ENCODE measurements at regions of chr15 and their contacts with region 1.

Region 1: DNA sequence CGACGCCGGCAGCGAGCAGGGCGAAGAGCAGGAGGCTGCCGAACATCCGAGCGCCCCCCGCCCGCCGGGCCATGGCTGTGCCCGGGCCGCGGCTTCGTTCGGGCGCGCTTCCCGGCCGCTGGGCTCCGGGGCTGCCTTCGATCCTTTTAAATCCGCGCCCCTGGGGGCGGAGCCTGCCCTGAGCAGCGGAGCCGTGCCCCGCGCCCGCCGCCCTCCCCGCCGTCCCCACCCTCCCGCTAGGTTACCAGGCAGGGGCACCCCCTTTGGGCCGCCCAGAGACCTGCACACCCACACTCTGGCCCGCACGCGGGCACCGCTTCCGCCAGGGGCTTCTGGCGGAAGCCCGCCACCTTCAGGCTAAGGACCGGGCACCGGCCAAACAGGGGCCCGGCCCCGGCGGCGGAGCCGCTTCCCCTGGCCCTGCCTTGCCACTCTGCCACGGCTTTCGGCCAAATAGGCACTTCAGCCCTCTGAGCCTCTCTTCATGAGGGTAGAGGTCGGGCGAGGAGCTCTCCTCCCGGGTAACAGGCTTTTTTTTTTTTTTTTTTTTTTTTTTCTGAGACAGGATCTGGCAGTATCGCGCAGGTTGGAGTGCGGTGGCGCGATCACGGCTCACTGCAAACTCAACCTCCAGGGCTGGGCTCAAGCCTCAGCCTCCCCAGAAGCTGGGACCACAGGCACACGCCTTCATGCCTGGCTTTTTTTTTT is at the start of gene NMB:
- DNase-seq: peak; percentile 63
- ATAC-seq: peak; percentile 63
- H3K4me3 ChIP-seq: peak within 1 kb of the TSS; percentile 62
- H3K27ac ChIP-seq: peak within 1 kb of the TSS; percentile 26; the same call in 1 of the 2 replicates
- H3K4me1 ChIP-seq: peaks cover 9% of the 10 kb centered on the region
- H3K27me3 ChIP-seq: no peaks in the 10 kb centered on the region
- CTCF ChIP-seq: peak; percentile 64
- POLR2A ChIP-seq: no peak
- RAD21 ChIP-seq: peak; percentile 21; the same call in 1 of the 2 replicates
- total RNA-seq, gene NMB: 1.3 and 1.4 TPM in 2 replicates

Region 2: GRCh38 chr15:84588053-84588874 is 70.0 kb before region 1 on chr15:
- CTCF ChIA-PET with region 1: no interaction called
- POLR2A ChIA-PET with region 1: no interaction called
- dilution Hi-C with region 1: no loop called
- in situ Hi-C with region 1: no loop called
- intact Hi-C with region 1: loop called (anchors 5 kb)
- DNase-seq: peak; percentile 64
- ATAC-seq: peak; percentile 100
- H3K4me3 ChIP-seq: peak overlapping the region; percentile 36; the same call in 1 of the 2 replicates
- H3K27ac ChIP-seq: no peak overlapping the region
- H3K4me1 ChIP-seq: no peaks in the 10 kb centered on the region
- H3K27me3 ChIP-seq: peaks cover 4% of the 10 kb centered on the region
- CTCF ChIP-seq: peak; percentile 68
- POLR2A ChIP-seq: no peak
- RAD21 ChIP-seq: peak; percentile 84

Region 3: GRCh38 chr15:84716036-84716799 is 58.0 kb after region 1 on chr15 and contains the start of gene SEC11A:
- CTCF ChIA-PET with region 1: no interaction called
- POLR2A ChIA-PET with region 1: no interaction called
- dilution Hi-C with region 1: no loop called
- in situ Hi-C with region 1: no loop called
- intact Hi-C with region 1: loop called (anchors 1 kb)
- DNase-seq: peak; percentile 92
- ATAC-seq: peak; percentile 99
- H3K4me3 ChIP-seq: peak within 1 kb of the TSS; percentile 88
- H3K27ac ChIP-seq: peak within 1 kb of the TSS; percentile 98
- H3K4me1 ChIP-seq: peaks cover 2% of the 10 kb centered on the region; the same call in 1 of the 2 replicates
- H3K27me3 ChIP-seq: no peaks in the 10 kb centered on the region
- CTCF ChIP-seq: no peak
- POLR2A ChIP-seq: peak; percentile 74
- RAD21 ChIP-seq: peak; percentile 31
- total RNA-seq, gene SEC11A: 62.4 and 233 TPM in 2 replicates

Region 4: DNA sequence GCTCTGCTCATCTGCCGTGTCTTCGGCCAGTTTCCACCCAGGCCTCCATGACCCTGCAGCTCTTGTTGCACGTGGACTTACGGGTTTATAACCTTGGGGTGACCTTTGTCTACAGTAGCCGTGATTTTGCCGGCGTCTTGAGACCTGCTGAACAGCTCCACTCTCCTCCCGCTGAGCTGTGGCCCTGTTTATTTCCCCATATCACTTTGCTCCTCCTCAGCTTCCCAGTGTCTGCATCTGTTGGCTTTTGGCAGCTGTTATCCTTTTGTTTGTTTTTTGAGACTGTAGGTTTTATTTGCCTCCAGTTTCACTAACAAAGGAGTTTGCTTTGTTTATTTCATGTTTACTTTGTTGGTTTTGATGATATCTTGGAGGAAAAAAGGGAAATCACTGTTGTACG is 196.9 kb after region 1 on chr15:
- CTCF ChIA-PET with region 1: no interaction called
- POLR2A ChIA-PET with region 1: no interaction called
- dilution Hi-C with region 1: no loop called
- in situ Hi-C with region 1: no loop called
- intact Hi-C with region 1: no loop called
- DNase-seq: no peak
- ATAC-seq: no peak
- H3K4me3 ChIP-seq: no peak overlapping the region
- H3K27ac ChIP-seq: no peak overlapping the region
- H3K4me1 ChIP-seq: no peaks in the 10 kb centered on the region
- H3K27me3 ChIP-seq: peaks cover 6% of the 10 kb centered on the region; the same call in 1 of the 2 replicates
- CTCF ChIP-seq: no peak
- POLR2A ChIP-seq: no peak
- RAD21 ChIP-seq: no peak

Region 5: DNA sequence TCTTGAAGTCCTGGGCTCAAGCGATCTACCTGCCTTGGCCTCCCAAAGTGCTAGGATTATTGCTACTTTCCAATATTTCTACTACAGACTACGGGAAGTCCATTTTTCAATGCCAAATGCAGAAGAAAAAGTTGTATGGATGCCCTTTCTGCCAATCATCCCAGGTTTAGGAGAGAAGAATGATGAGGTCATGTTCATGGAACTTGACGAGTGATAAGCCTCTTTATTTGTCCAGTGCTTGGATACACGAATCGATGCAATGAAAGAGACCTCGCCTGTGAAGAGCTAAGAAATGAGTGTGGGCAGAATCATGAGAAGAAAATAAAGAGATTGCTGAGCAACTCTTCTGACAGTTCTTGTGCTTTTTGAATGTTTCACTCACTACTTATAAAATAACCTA is 225.2 kb after region 1 on chr15:
- CTCF ChIA-PET with region 1: interaction called, 6 read pairs
- POLR2A ChIA-PET with region 1: no interaction called
- dilution Hi-C with region 1: no loop called
- in situ Hi-C with region 1: no loop called
- intact Hi-C with region 1: loop called (anchors 1 kb)
- DNase-seq: no peak
- ATAC-seq: no peak
- H3K4me3 ChIP-seq: no peak overlapping the region
- H3K27ac ChIP-seq: no peak overlapping the region
- H3K4me1 ChIP-seq: no peaks in the 10 kb centered on the region
- H3K27me3 ChIP-seq: peaks cover 34% of the 10 kb centered on the region
- CTCF ChIP-seq: no peak
- POLR2A ChIP-seq: no peak
- RAD21 ChIP-seq: no peak

Region 6: GRCh38 chr15:85044251-85044853 is 386.1 kb after region 1 on chr15:
- CTCF ChIA-PET with region 1: no interaction called
- POLR2A ChIA-PET with region 1: no interaction called
- dilution Hi-C with region 1: no loop called
- in situ Hi-C with region 1: no loop called
- intact Hi-C with region 1: loop called (anchors 5 kb)
- DNase-seq: peak; percentile 80
- ATAC-seq: peak; percentile 67
- H3K4me3 ChIP-seq: no peak overlapping the region
- H3K27ac ChIP-seq: no peak overlapping the region
- H3K4me1 ChIP-seq: peaks cover 4% of the 10 kb centered on the region
- H3K27me3 ChIP-seq: no peaks in the 10 kb centered on the region
- CTCF ChIP-seq: peak; percentile 75
- POLR2A ChIP-seq: no peak
- RAD21 ChIP-seq: peak; percentile 82

Region 7: GRCh38 chr15:85063126-85064079 is 405.2 kb after region 1 on chr15:
- CTCF ChIA-PET with region 1: no interaction called
- POLR2A ChIA-PET with region 1: no interaction called
- dilution Hi-C with region 1: no loop called
- in situ Hi-C with region 1: no loop called
- intact Hi-C with region 1: no loop called
- DNase-seq: peak; percentile 57
- ATAC-seq: peak; percentile 86
- H3K4me3 ChIP-seq: no peak overlapping the region
- H3K27ac ChIP-seq: peak overlapping the region; percentile 25; the same call in 1 of the 2 replicates
- H3K4me1 ChIP-seq: peaks cover 9% of the 10 kb centered on the region
- H3K27me3 ChIP-seq: no peaks in the 10 kb centered on the region
- CTCF ChIP-seq: no peak
- POLR2A ChIP-seq: no peak
- RAD21 ChIP-seq: no peak